ENCODE measurements at regions of chr4 and their contacts with region 1.

Region 1: DNA sequence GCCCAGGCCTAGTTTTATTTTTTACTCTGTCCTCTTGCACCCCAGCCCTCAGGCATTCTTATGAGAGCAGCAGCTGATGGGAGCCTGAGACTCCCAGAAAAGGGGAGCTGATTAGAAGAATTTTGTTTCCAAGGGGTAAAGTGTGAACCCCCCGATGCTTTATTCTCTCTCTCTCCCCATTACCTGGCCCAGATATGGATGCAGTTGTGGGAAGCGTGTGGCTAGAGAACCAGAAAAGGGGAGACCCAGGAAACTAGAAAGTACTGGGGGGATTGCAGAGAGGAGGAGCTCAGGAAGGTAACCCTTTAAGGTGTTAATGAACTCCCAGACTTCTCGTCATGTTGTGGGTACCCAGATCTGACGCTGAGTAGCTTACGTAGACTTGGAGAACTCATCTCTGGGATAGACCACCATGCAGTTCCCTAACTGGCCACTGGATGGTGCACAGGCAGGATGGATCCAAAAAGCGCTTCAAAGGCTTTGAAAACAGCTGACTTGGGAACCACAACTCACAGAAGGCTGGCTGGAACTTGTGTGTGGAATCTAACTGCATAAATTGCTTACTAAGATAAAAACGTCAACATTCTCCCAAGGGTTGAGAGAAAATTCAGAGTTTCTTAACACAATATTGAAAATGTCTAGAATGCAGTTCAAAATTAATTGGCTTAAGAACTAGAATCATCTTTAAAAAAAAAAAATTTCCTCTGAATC is 64.7 kb downstream of the TBC1D14 start:
- DNase-seq: peak; percentile 59 to 90 (median 85)
- ATAC-seq: peak; percentile 100
- H3K4me3 ChIP-seq: no peak overlapping the region
- H3K4me3 Mint-ChIP-seq: no peak overlapping the region
- H3K27ac ChIP-seq: no peak overlapping the region
- H3K27ac Mint-ChIP-seq: peak overlapping the region; percentile 18
- H3K4me1 ChIP-seq: peaks cover 8% of the 10 kb centered on the region
- H3K4me1 Mint-ChIP-seq: peaks cover 21% of the 10 kb centered on the region
- H3K27me3 ChIP-seq: no peaks in the 10 kb centered on the region
- H3K27me3 Mint-ChIP-seq: no peaks in the 10 kb centered on the region
- CTCF ChIP-seq: peak; percentile 85

Region 2: GRCh38 chr4:6917461-6918271 is 56.6 kb before region 1 on chr4:
- CTCF ChIA-PET with region 1: interaction called, 10 read pairs
- POLR2A ChIA-PET with region 1: no interaction called
- intact Hi-C with region 1: no loop called
- DNase-seq: peak in 4 of 9 experiments; percentile 34 to 65 (median 56)
- ATAC-seq: peak; percentile 43
- H3K4me3 ChIP-seq: peak overlapping the region in 1 of 2 experiments; percentile 12
- H3K4me3 Mint-ChIP-seq: peak overlapping the region; percentile 52
- H3K27ac ChIP-seq: peak overlapping the region; percentile 34 to 72
- H3K27ac Mint-ChIP-seq: peak overlapping the region; percentile 94
- H3K4me1 ChIP-seq: peaks cover 51% of the 10 kb centered on the region
- H3K4me1 Mint-ChIP-seq: peaks cover 78% of the 10 kb centered on the region
- H3K27me3 ChIP-seq: no peaks in the 10 kb centered on the region
- H3K27me3 Mint-ChIP-seq: no peaks in the 10 kb centered on the region
- CTCF ChIP-seq: peak; percentile 40

Region 3: GRCh38 chr4:6963139-6963611 is 11.1 kb before region 1 on chr4:
- CTCF ChIA-PET with region 1: interaction called, 17 read pairs
- POLR2A ChIA-PET with region 1: no interaction called
- intact Hi-C with region 1: no loop called
- DNase-seq: no peak
- ATAC-seq: no peak
- H3K4me3 ChIP-seq: no peak overlapping the region
- H3K4me3 Mint-ChIP-seq: no peak overlapping the region
- H3K27ac ChIP-seq: no peak overlapping the region
- H3K27ac Mint-ChIP-seq: peak overlapping the region; percentile 37
- H3K4me1 ChIP-seq: peaks cover 3% of the 10 kb centered on the region
- H3K4me1 Mint-ChIP-seq: peaks cover 53% of the 10 kb centered on the region
- H3K27me3 ChIP-seq: no peaks in the 10 kb centered on the region
- H3K27me3 Mint-ChIP-seq: no peaks in the 10 kb centered on the region
- CTCF ChIP-seq: no peak

Measured in CD8-positive, alpha-beta T cell (primary cell).